Naive thymus-derived CD4-positive, alpha-beta T cell (primary cell): ENCODE measurements at regions of chr2 and their contacts with region 1.

Region 1: DNA sequence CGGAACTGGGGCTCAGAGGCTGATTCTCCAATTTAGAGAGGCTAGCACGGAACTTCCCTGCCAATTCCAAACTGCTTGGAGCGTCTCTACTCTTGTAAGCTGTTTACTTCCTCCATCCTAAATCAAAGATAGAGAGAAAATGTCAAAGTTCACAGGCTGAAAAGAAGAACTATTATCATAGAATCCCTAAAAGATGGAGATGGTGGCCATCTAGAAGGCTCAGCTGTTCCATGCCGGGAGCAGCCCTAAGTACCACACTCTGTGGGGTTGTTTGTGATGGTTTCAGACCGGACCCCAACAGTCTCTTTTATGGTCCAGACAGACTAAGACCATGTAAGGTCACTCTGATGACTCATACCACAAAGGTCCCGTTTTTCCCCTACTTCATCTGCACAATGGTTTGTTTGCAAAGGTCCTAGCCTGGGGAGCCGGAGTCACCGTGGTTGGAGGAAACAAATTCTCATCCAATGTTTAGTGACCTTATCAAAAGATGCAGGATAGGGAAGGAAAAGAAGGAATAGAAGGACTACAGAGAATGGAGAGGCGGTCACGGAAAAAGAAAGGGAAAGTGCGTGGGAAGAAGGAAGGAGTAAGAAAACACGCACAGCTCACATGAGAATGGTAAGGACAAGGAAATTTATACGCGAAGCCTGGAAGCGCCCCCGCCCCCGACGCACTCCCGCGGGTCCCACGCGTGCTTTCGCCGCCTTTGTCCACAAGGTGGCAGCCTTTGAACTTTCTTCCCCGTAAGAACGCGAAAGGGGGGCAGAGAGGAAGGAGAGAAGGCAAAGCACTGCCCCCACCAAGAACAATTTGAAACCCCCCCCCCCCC is 453 bp upstream of the ANTXR1 start:
- DNase-seq: peak in 8 of 9 donors; percentile 5 to 39 (median 30)
- ATAC-seq: peak; percentile 72
- H3K4me3 ChIP-seq: peak overlapping the region; percentile 56
- H3K4me3 Mint-ChIP-seq: peak overlapping the region; percentile 76 to 89 (median 86)
- H3K27ac ChIP-seq: no peak overlapping the region
- H3K27ac Mint-ChIP-seq: peak overlapping the region in 1 of 9 donors; percentile 20
- H3K4me1 ChIP-seq: peaks cover 0 to 5% of the 10 kb centered on the region in 2 donors
- H3K4me1 Mint-ChIP-seq: peaks cover 7 to 17% (median 14%) of the 10 kb centered on the region in 7 donors
- H3K27me3 ChIP-seq: peaks cover 0 to 7% of the 10 kb centered on the region in 2 donors
- H3K27me3 Mint-ChIP-seq: peaks cover 33 to 75% (median 47%) of the 10 kb centered on the region in 5 donors

Region 2: DNA sequence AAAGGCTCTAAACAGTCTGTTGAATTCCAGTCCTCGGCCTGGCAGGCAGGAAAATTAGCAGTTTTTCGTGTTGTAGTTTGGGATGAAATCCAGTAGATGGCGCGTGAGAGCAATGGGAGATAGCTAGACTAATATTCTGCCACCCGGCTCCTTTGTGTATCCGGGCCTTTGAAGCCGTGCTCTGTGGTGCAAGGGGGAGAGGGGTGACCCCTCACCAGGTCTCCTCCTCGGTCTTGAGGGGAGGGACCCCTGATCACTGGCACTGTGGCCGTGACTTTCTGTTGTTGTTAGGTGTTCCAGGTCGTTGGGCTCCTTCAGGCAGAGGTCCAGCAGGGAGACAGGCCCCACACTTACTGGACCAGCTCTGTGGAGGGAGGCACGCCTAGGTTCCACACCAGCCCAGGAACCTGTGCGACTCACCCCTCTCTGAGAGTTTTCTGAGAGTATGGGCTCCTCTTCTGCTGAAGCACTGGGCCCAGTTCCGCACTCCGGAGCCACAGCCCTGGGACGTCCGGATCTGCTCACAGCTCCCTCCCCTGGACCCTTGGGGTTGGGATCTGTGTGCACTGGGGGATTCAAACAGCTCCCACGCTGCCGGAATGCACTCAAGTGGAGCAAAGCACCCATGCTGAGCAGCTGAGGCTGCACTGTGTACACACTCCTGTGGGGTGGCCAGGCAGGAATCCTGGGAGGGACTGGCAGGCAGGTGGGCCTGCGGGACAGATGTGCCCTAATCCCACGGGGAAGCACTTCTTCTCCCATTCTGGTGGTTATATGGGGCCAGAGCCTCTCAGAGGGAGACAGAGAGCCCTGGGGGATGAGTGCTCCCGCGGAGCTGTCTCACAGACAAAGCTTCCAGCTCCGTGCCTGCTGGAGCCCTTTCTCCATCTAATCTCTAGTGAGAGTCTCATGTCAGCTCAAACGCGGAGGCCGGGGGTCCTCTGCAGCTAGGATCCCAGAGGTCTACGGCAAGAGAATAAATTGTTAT is 68.7 kb before region 1 on chr2:
- CTCF ChIA-PET with region 1: no interaction called
- POLR2A ChIA-PET with region 1: no interaction called
- intact Hi-C with region 1: loop called in 1 of 2 experiments (anchors 5 kb)
- DNase-seq: peak; percentile 23 to 62 (median 49)
- ATAC-seq: peak; percentile 74
- H3K4me3 ChIP-seq: no peak overlapping the region
- H3K4me3 Mint-ChIP-seq: no peak overlapping the region
- H3K27ac ChIP-seq: no peak overlapping the region
- H3K27ac Mint-ChIP-seq: peak overlapping the region in 1 of 9 donors; percentile 69
- H3K4me1 ChIP-seq: no peaks in the 10 kb centered on the region
- H3K4me1 Mint-ChIP-seq: peaks cover 0 to 4% (median 0%) of the 10 kb centered on the region in 7 donors
- H3K27me3 ChIP-seq: peaks cover 0 to 4% of the 10 kb centered on the region in 2 donors
- H3K27me3 Mint-ChIP-seq: peaks cover 14 to 67% (median 33%) of the 10 kb centered on the region in 5 donors

Region 3: GRCh38 chr2:68987021-68987503 is 25.5 kb before region 1 on chr2:
- CTCF ChIA-PET with region 1: no interaction called
- POLR2A ChIA-PET with region 1: no interaction called
- intact Hi-C with region 1: no loop called
- DNase-seq: no peak
- ATAC-seq: no peak
- H3K4me3 ChIP-seq: no peak overlapping the region
- H3K4me3 Mint-ChIP-seq: no peak overlapping the region
- H3K27ac ChIP-seq: no peak overlapping the region
- H3K27ac Mint-ChIP-seq: no peak overlapping the region
- H3K4me1 ChIP-seq: no peaks in the 10 kb centered on the region
- H3K4me1 Mint-ChIP-seq: no peaks in the 10 kb centered on the region
- H3K27me3 ChIP-seq: no peaks in the 10 kb centered on the region
- H3K27me3 Mint-ChIP-seq: peaks cover 6 to 23% (median 10%) of the 10 kb centered on the region in 5 donors

Region 4: DNA sequence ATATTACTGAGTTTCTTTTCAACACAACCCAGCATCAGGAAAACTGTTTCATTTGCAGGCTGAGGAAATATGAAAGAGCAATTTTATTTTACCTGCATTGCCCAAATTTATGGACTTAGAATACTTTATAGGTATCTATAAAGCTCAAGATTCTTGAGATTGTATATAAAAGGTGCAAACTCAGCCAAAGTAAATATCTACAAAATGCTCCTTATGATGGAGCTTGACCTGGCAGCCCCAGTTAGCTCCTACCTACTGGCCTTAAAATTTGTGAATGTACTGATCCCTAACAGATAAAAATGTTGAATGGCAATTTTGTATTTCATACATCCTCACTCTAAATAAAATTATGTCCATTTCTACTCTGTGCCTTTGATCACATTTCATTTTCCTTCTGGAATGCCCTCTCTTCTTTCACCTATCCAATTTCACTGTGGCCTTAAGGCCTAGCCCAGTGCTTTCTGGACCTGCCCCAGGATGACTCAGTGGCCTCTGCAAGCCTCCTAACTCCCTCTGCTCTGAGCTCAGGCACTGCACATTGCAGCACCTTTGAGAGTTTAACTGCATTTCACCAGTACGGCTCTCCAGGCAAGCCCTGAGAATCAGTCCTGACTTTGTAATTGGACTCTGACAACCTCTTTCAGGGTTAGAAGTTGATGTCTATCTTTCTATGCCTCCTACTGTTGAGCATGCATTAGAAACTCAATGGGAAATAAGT is 126.4 kb after region 1 on chr2:
- CTCF ChIA-PET with region 1: no interaction called
- POLR2A ChIA-PET with region 1: no interaction called
- intact Hi-C with region 1: no loop called
- DNase-seq: no peak
- ATAC-seq: no peak
- H3K4me3 ChIP-seq: no peak overlapping the region
- H3K4me3 Mint-ChIP-seq: no peak overlapping the region
- H3K27ac ChIP-seq: no peak overlapping the region
- H3K27ac Mint-ChIP-seq: no peak overlapping the region
- H3K4me1 ChIP-seq: no peaks in the 10 kb centered on the region
- H3K4me1 Mint-ChIP-seq: no peaks in the 10 kb centered on the region
- H3K27me3 ChIP-seq: no peaks in the 10 kb centered on the region
- H3K27me3 Mint-ChIP-seq: peaks cover 7 to 17% (median 11%) of the 10 kb centered on the region in 5 donors